Natural killer cell (primary cell): ENCODE measurements at regions of chr15 and their contacts with region 1.

Region 1: DNA sequence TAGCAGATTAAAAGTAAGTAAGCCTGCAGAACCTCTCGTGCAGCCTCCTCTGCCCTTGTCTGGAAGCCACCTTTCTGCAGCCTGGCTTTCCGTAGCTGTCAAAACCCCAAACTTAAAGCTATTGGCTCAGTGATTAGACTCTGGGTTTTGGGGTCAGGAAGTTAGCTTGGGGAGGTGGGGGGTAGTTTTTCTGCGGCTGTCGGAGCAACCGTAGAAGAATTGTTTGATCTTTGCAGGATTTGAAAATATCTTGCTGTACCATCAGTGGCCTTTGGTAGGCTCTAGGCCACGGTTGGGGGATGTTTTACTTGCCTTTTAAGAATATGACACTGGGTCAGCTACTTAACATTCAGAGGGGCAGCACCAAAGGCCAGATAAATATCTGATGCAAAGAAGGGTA is 88.4 kb upstream of the RASGRP1 start:
- DNase-seq: peak; percentile 70 to 95
- ATAC-seq: peak; percentile 77 to 89 (median 84)
- H3K4me3 ChIP-seq: no peak overlapping the region
- H3K4me3 Mint-ChIP-seq: peak overlapping the region; percentile 89
- H3K27ac ChIP-seq: peak overlapping the region; percentile 75
- H3K27ac Mint-ChIP-seq: peak overlapping the region; percentile 95 to 96
- H3K4me1 ChIP-seq: peaks cover 45% of the 10 kb centered on the region
- H3K4me1 Mint-ChIP-seq: peaks cover 65 to 66% of the 10 kb centered on the region in 2 donors
- H3K27me3 ChIP-seq: no peaks in the 10 kb centered on the region
- H3K27me3 Mint-ChIP-seq: no peaks in the 10 kb centered on the region
- CTCF ChIP-seq: peak; percentile 27

Region 2: DNA sequence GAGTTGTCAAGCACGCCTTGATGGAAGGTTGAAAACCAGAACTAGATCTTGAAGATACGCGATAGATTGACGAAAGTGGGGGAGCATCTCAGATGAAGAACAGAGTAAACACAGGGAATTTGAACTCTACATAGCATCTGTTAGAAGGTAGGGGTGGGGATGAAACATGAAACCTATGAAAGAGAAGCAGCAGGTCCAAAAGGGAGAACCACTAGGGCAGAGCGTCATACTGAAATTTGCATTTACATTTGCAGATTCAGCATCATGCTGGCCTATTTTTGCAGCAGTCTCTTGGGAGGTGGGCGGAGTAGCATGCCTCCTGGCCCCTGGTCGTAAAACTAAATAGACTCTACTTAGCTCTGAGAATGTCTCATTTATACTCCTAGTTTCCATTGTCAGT is 42.2 kb before region 1 on chr15:
- intact Hi-C with region 1: loop called (anchors 1 kb)
- DNase-seq: peak in 1 of 2 donors; percentile 64
- ATAC-seq: peak; percentile 56 to 69 (median 66)
- H3K4me3 ChIP-seq: no peak overlapping the region
- H3K4me3 Mint-ChIP-seq: peak overlapping the region; percentile 87
- H3K27ac ChIP-seq: peak overlapping the region; percentile 60
- H3K27ac Mint-ChIP-seq: peak overlapping the region; percentile 85 to 88
- H3K4me1 ChIP-seq: peaks cover 35% of the 10 kb centered on the region
- H3K4me1 Mint-ChIP-seq: peaks cover 64 to 67% of the 10 kb centered on the region in 2 donors
- H3K27me3 ChIP-seq: no peaks in the 10 kb centered on the region
- H3K27me3 Mint-ChIP-seq: no peaks in the 10 kb centered on the region
- CTCF ChIP-seq: no peak

Region 3: GRCh38 chr15:38699633-38700230 is 46.7 kb after region 1 on chr15:
- intact Hi-C with region 1: no loop called
- DNase-seq: peak; percentile 50 to 90
- ATAC-seq: peak; percentile 49 to 72 (median 51)
- H3K4me3 ChIP-seq: no peak overlapping the region
- H3K4me3 Mint-ChIP-seq: peak overlapping the region; percentile 4
- H3K27ac ChIP-seq: no peak overlapping the region
- H3K27ac Mint-ChIP-seq: peak overlapping the region; percentile 41 to 59
- H3K4me1 ChIP-seq: peaks cover 26% of the 10 kb centered on the region
- H3K4me1 Mint-ChIP-seq: peaks cover 36 to 39% of the 10 kb centered on the region in 2 donors
- H3K27me3 ChIP-seq: no peaks in the 10 kb centered on the region
- H3K27me3 Mint-ChIP-seq: no peaks in the 10 kb centered on the region
- CTCF ChIP-seq: peak; percentile 85